Endothelial cell of umbilical vein (primary cell): ENCODE measurements at regions of chr2 and their contacts with region 1.

Region 1: DNA sequence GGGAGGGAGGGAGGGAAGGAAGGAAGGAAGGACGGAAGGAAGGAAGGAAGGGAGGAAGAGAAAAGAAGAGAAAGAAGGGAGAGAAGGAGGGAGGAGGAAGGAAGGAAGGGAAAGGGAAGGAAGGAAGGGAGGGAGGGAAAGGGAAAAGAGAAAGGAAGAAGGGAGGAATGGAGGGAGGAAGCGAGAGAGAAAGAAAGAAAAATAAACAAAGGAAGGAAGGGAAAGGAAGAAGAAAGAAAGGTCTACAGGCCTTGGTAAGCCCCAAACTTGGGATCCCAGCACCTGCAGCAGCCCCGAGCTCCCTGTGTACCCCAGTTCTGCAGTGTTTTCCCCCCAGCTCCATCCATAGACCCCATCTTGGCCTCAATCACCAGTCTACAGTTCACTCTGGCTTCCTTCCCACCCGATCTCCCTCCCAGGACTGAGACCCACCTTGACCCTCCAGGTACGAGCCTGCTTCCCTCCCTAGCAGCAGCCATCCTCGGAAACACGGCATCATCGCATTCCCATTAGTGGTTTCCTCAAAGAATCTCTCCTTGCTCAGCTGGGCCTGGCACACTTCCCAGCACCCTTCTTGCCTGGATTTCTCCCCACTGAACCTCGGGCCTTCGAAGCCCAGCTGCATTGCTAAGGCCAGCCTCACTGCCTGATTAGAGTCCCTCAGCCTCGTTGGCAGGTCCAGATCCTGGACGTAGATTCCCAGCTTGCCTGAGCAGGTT is 46.1 kb upstream of the SH3BP4 start:
- DNase-seq: no peak
- H3K4me3 ChIP-seq: no peak overlapping the region
- H3K27ac ChIP-seq: no peak overlapping the region
- H3K4me1 ChIP-seq: no peaks in the 10 kb centered on the region
- H3K27me3 ChIP-seq: no peaks in the 10 kb centered on the region
- CTCF ChIP-seq: no peak
- POLR2A ChIP-seq: no peak

Region 2: DNA sequence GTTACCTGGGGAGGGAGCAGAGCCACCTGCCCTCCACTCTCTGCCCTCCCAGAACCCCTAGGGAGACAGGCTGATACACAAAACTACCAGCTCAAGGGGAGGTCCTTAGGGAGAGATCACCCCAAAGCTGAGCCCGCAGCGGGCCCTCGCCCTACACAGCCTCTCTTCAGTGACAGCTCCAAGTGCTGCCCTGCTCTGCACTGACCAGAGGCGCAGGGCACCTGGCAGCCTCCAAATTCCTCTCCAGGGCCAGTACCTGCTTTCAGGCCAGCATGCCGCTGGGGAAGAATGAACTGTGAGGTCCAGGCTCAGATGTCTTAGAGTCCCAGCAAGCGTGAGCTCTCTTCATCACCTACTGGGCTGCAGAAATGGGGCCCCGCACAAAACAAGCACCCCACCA is 34.8 kb after region 1 on chr2:
- CTCF ChIA-PET with region 1: no interaction called
- POLR2A ChIA-PET with region 1: no interaction called
- dilution Hi-C with region 1: no loop called
- intact Hi-C with region 1: loop called (anchors 5 kb)
- DNase-seq: no peak
- H3K4me3 ChIP-seq: no peak overlapping the region
- H3K27ac ChIP-seq: no peak overlapping the region
- H3K4me1 ChIP-seq: no peaks in the 10 kb centered on the region
- H3K27me3 ChIP-seq: peaks cover 11 to 23% of the 10 kb centered on the region in 2 experiments
- CTCF ChIP-seq: no peak
- POLR2A ChIP-seq: no peak